ENCODE measurements at regions of chr19 and their contacts with region 1.

Region 1: GRCh38 chr19:52171321-52172169 is at the start of gene ZNF836:
- DNase-seq: peak; percentile 79 to 95 (median 92)
- ATAC-seq: peak; percentile 92
- H3K4me3 ChIP-seq: peak within 1 kb of the TSS; percentile 83 to 96
- H3K4me3 Mint-ChIP-seq: peak within 1 kb of the TSS; percentile 94
- H3K27ac ChIP-seq: peak within 1 kb of the TSS; percentile 72 to 96
- H3K27ac Mint-ChIP-seq: peak within 1 kb of the TSS; percentile 95
- H3K4me1 ChIP-seq: peaks cover 24% of the 10 kb centered on the region
- H3K4me1 Mint-ChIP-seq: peaks cover 41% of the 10 kb centered on the region
- H3K27me3 ChIP-seq: no peaks in the 10 kb centered on the region
- H3K27me3 Mint-ChIP-seq: no peaks in the 10 kb centered on the region
- CTCF ChIP-seq: no peak
- total RNA-seq, gene ZNF836: 17.6 to 22.1 TPM

Region 2: GRCh38 chr19:52155596-52156359 is 15.8 kb before region 1 on chr19:
- CTCF ChIA-PET with region 1: no interaction called
- POLR2A ChIA-PET with region 1: no interaction called
- intact Hi-C with region 1: no loop called
- DNase-seq: no peak
- ATAC-seq: no peak
- H3K4me3 ChIP-seq: no peak overlapping the region
- H3K4me3 Mint-ChIP-seq: no peak overlapping the region
- H3K27ac ChIP-seq: no peak overlapping the region
- H3K27ac Mint-ChIP-seq: no peak overlapping the region
- H3K4me1 ChIP-seq: no peaks in the 10 kb centered on the region
- H3K4me1 Mint-ChIP-seq: no peaks in the 10 kb centered on the region
- H3K27me3 ChIP-seq: no peaks in the 10 kb centered on the region
- H3K27me3 Mint-ChIP-seq: no peaks in the 10 kb centered on the region
- CTCF ChIP-seq: no peak

Region 3: GRCh38 chr19:52269338-52270261 is 98.1 kb after region 1 on chr19 and contains the start of gene ZNF766:
- CTCF ChIA-PET with region 1: no interaction called
- POLR2A ChIA-PET with region 1: no interaction called
- intact Hi-C with region 1: loop called in 1 of 2 experiments (anchors 1 kb)
- DNase-seq: peak; percentile 95 to 98 (median 97)
- ATAC-seq: peak; percentile 98
- H3K4me3 ChIP-seq: peak within 1 kb of the TSS; percentile 89 to 95
- H3K4me3 Mint-ChIP-seq: peak within 1 kb of the TSS; percentile 98
- H3K27ac ChIP-seq: peak within 1 kb of the TSS; percentile 96
- H3K27ac Mint-ChIP-seq: peak within 1 kb of the TSS; percentile 98
- H3K4me1 ChIP-seq: peaks cover 13% of the 10 kb centered on the region
- H3K4me1 Mint-ChIP-seq: peaks cover 41% of the 10 kb centered on the region
- H3K27me3 ChIP-seq: no peaks in the 10 kb centered on the region
- H3K27me3 Mint-ChIP-seq: no peaks in the 10 kb centered on the region
- CTCF ChIP-seq: no peak
- total RNA-seq, gene ZNF766: 50.8 to 52.6 TPM

Region 4: DNA sequence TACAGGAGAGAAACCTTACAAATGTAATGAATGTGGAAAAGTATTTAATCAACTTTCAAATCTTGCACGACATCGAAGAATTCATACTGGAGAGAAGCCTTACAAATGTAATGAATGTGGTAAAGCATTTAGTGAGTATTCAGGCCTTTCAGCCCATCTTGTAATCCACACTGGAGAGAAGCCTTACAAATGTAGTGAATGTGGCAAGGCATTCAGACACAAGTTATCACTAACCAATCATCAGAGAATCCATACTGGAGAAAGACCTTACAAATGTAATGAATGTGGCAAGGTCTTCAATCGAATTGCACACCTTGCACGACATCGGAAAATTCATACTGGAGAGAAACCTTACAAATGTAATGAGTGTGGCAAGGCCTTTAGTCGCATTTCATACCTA is 150.9 kb after region 1 on chr19:
- CTCF ChIA-PET with region 1: no interaction called
- POLR2A ChIA-PET with region 1: no interaction called
- intact Hi-C with region 1: no loop called
- DNase-seq: no peak
- ATAC-seq: no peak
- H3K4me3 ChIP-seq: peak overlapping the region in 1 of 2 experiments; percentile 16
- H3K4me3 Mint-ChIP-seq: no peak overlapping the region
- H3K27ac ChIP-seq: no peak overlapping the region
- H3K27ac Mint-ChIP-seq: no peak overlapping the region
- H3K4me1 ChIP-seq: no peaks in the 10 kb centered on the region
- H3K4me1 Mint-ChIP-seq: no peaks in the 10 kb centered on the region
- H3K27me3 ChIP-seq: no peaks in the 10 kb centered on the region
- H3K27me3 Mint-ChIP-seq: no peaks in the 10 kb centered on the region
- CTCF ChIP-seq: no peak

Region 5: GRCh38 chr19:52981329-52981728 is 809.8 kb after region 1 on chr19:
- CTCF ChIA-PET with region 1: no interaction called
- POLR2A ChIA-PET with region 1: no interaction called
- intact Hi-C with region 1: no loop called
- DNase-seq: no peak
- ATAC-seq: no peak
- H3K4me3 ChIP-seq: no peak overlapping the region
- H3K4me3 Mint-ChIP-seq: no peak overlapping the region
- H3K27ac ChIP-seq: no peak overlapping the region
- H3K27ac Mint-ChIP-seq: no peak overlapping the region
- H3K4me1 ChIP-seq: no peaks in the 10 kb centered on the region
- H3K4me1 Mint-ChIP-seq: no peaks in the 10 kb centered on the region
- H3K27me3 ChIP-seq: no peaks in the 10 kb centered on the region
- H3K27me3 Mint-ChIP-seq: no peaks in the 10 kb centered on the region
- CTCF ChIP-seq: no peak